Sigmoid colon (tissue), 7 donors: ENCODE measurements at regions of chr22 and their contacts with region 1.

Region 1: GRCh38 chr22:27885977-27886842 is 32.8 kb downstream of the PITPNB start:
- DNase-seq: no peak
- H3K4me3 ChIP-seq: no peak overlapping the region
- H3K27ac ChIP-seq: peak overlapping the region; percentile 82 to 87 (median 84)
- H3K4me1 ChIP-seq: peaks cover 0 to 67% (median 63%) of the 10 kb centered on the region in 4 donors
- H3K27me3 ChIP-seq: no peaks in the 10 kb centered on the region
- CTCF ChIP-seq: peak; percentile 78 to 91 (median 82)
- EP300 ChIP-seq: peak in 1 of 4 donors; percentile 12
- POLR2A ChIP-seq: no peak

Region 2: GRCh38 chr22:27780161-27780575 is 106.0 kb before region 1 on chr22:
- intact Hi-C with region 1: no loop called
- DNase-seq: no peak
- H3K4me3 ChIP-seq: no peak overlapping the region
- H3K27ac ChIP-seq: peak overlapping the region in 3 of 4 donors; percentile 60 to 93 (median 88)
- H3K4me1 ChIP-seq: peaks cover 0 to 51% (median 21%) of the 10 kb centered on the region in 4 donors
- H3K27me3 ChIP-seq: no peaks in the 10 kb centered on the region
- CTCF ChIP-seq: no peak
- EP300 ChIP-seq: no peak
- POLR2A ChIP-seq: no peak

Region 3: DNA sequence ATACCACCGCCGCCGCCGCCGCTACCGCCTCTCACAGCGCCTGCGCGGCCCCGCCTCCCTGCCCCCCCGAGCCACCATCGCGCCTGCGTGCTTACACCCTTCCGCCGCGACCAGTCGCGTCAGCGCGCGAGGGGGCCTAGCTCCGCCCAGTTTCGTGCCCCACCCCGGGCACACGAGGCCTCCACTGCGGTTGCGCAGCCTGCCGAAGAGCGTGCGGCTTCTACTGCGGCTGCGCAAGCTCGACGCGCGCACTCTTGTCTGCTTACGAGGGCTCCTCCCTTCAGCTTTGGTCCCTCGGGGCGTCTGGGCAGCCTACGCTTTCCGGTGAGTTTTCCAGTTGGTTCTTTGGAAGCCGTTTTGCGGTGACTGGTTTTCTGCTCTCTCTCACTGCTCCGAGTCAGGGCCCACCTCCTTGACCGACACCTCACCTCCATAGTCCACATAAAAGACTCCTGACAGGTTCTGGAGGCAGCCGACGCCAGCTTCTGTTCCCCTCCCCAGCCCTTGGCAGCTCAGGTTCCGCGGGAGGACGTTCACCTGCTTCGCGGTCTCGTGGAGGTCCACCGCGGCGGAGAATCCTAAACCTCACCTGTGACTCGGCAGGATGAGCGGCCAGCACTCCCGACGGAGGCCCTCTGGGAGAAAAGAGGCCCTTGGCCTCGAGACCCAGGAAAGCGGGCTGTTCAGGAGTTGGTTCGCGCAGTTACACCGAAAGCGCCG is 33.2 kb after region 1 on chr22 and contains the start of gene PITPNB:
- intact Hi-C with region 1: loop called (anchors 2 kb)
- DNase-seq: peak; percentile 99
- H3K4me3 ChIP-seq: peak within 1 kb of the TSS; percentile 75 to 98 (median 89)
- H3K27ac ChIP-seq: peak within 1 kb of the TSS; percentile 95 to 98 (median 96)
- H3K4me1 ChIP-seq: peaks cover 0 to 62% (median 51%) of the 10 kb centered on the region in 4 donors
- H3K27me3 ChIP-seq: no peaks in the 10 kb centered on the region
- CTCF ChIP-seq: no peak
- EP300 ChIP-seq: no peak
- POLR2A ChIP-seq: peak; percentile 74 to 86
- total RNA-seq, gene PITPNB: 79.9 to 135 (median 104) TPM